Left ventricle myocardium inferior (tissue), 1 donor: ENCODE measurements at regions of chr1 and their contacts with region 1.

Region 1: GRCh38 chr1:198756470-198756869 is 117.6 kb downstream of the PTPRC start:
- DNase-seq: no peak
- H3K4me3 ChIP-seq: no peak overlapping the region
- H3K27ac ChIP-seq: no peak overlapping the region
- H3K4me1 ChIP-seq: no peaks in the 10 kb centered on the region
- H3K27me3 ChIP-seq: no peaks in the 10 kb centered on the region
- CTCF ChIP-seq: peak; percentile 61

Region 2: DNA sequence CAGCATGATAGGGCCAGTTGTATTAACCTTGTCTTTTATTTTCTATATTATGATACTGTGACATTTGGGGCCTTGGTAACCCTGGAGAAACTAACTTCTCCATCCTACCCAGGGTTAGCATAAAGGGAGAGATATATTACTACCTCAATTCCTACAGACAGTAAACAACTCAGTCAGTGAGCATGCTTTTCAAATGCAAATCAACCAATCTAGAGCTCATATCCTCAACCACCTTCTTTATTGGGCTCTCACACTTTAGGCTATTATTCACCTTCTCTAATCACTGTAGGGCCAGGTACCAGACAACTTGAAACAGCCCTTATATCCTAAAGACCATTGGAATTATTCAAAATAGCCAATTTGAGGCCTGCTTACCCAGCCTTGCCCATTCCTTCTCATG is 360.0 kb after region 1 on chr1:
- intact Hi-C with region 1: loop called (anchors 5 kb)
- DNase-seq: no peak
- H3K4me3 ChIP-seq: no peak overlapping the region
- H3K27ac ChIP-seq: no peak overlapping the region
- H3K4me1 ChIP-seq: no peaks in the 10 kb centered on the region
- H3K27me3 ChIP-seq: no peaks in the 10 kb centered on the region
- CTCF ChIP-seq: no peak

Region 3: GRCh38 chr1:199545780-199546179 is 789.3 kb after region 1 on chr1:
- intact Hi-C with region 1: loop called (anchors 10 kb)
- DNase-seq: no peak
- H3K4me3 ChIP-seq: no peak overlapping the region
- H3K27ac ChIP-seq: no peak overlapping the region
- H3K4me1 ChIP-seq: no peaks in the 10 kb centered on the region
- H3K27me3 ChIP-seq: no peaks in the 10 kb centered on the region
- CTCF ChIP-seq: no peak